ENCODE measurements at regions of chr17 and their contacts with region 1.

Region 1: GRCh38 chr17:31722251-31723056 is 136.6 kb downstream of the COPRS start:
- DNase-seq: peak; percentile 21 to 64
- ATAC-seq: peak; percentile 88 to 98 (median 95)
- H3K4me3 ChIP-seq: no peak overlapping the region
- H3K27ac ChIP-seq: peak overlapping the region in 9 of 10 donors; percentile 47 to 88 (median 82)
- H3K4me1 ChIP-seq: peaks cover 13 to 36% (median 27%) of the 10 kb centered on the region in 9 donors
- H3K27me3 ChIP-seq: no peaks in the 10 kb centered on the region
- CTCF ChIP-seq: no peak

Region 2: GRCh38 chr17:31581022-31581490 is 141.4 kb before region 1 on chr17:
- intact Hi-C with region 1: loop called in 1 of 10 experiments (anchors 10 kb)
- DNase-seq: peak; percentile 79 to 83
- ATAC-seq: peak; percentile 80 to 94 (median 88)
- H3K4me3 ChIP-seq: peak overlapping the region in 7 of 10 donors; percentile 22 to 41 (median 32)
- H3K27ac ChIP-seq: peak overlapping the region; percentile 53 to 95 (median 85)
- H3K4me1 ChIP-seq: peaks cover 6 to 54% (median 36%) of the 10 kb centered on the region in 9 donors
- H3K27me3 ChIP-seq: no peaks in the 10 kb centered on the region
- CTCF ChIP-seq: no peak

Region 3: DNA sequence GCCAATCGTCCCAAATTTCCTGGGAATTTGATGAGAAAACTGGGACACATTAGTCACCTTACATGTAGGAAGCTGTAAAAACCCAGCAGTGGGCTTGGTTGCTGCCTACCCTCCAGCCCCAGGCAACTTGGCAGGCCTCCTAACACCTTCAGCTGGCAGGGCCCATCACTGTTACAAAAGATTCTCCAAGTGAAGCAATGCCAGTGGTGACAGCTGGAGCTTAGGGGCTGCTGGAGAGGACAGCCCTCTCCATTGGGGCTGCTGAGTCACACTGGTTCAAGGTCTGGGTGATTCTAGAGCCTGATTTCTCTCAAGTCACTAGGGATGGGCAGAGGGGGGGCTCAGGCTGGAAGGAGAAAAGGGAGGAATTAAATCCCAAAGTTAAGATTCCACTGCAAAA is 44.0 kb before region 1 on chr17:
- intact Hi-C with region 1: no loop called
- DNase-seq: no peak
- ATAC-seq: peak in 5 of 8 donors; percentile 23 to 83 (median 41)
- H3K4me3 ChIP-seq: no peak overlapping the region
- H3K27ac ChIP-seq: no peak overlapping the region
- H3K4me1 ChIP-seq: peaks cover 0 to 12% (median 7%) of the 10 kb centered on the region in 9 donors
- H3K27me3 ChIP-seq: no peaks in the 10 kb centered on the region
- CTCF ChIP-seq: no peak

Region 4: GRCh38 chr17:31702041-31702440 is 20.4 kb before region 1 on chr17:
- intact Hi-C with region 1: no loop called
- DNase-seq: no peak
- ATAC-seq: no peak
- H3K4me3 ChIP-seq: no peak overlapping the region
- H3K27ac ChIP-seq: no peak overlapping the region
- H3K4me1 ChIP-seq: peaks cover 0 to 9% (median 6%) of the 10 kb centered on the region in 9 donors
- H3K27me3 ChIP-seq: no peaks in the 10 kb centered on the region
- CTCF ChIP-seq: no peak